BJ (cell line): ENCODE measurements at regions of chr4 and their contacts with region 1.

Region 1: DNA sequence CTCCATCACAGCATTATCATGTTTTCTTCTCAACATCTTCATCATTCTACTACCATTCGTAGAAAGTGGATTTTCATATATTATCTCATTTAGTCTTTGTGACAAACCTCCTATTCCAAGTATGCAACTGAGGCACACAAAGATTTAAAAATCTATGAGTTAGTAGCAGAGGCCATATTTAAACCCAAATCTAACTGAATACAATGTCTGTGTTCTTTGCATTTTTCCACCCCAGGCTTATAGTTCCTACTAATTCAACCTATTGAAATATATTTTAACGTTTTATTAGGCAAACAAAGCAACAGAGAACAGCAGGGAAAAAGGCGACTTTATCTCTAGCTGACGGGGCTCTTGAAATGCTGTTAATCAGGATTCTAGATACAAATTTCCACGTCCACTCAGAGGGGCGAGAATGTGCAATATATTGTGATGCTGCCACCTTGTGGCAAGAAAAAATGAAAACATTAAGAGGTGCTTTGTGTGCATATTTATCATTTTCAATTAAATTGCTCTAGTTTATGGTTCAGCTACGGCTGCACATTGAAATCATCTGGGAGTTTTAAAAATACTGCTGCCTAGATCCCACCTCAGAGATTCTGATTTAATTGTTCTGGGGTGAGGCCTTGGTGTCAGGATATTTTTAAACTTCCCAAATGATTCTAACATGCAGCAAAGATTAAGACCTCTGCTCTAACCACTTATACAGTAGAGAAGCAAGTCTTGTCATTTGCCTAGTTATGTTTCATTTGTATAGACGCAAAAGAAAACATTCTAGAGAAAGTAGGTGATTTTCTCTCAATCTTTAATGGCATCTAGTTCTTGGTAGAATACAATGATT is 315.9 kb downstream of the MAPK10 start:
- DNase-seq: no peak
- H3K4me3 ChIP-seq: no peak overlapping the region
- H3K27me3 ChIP-seq: no peaks in the 10 kb centered on the region
- CTCF ChIP-seq: peak; percentile 57

Region 2: DNA sequence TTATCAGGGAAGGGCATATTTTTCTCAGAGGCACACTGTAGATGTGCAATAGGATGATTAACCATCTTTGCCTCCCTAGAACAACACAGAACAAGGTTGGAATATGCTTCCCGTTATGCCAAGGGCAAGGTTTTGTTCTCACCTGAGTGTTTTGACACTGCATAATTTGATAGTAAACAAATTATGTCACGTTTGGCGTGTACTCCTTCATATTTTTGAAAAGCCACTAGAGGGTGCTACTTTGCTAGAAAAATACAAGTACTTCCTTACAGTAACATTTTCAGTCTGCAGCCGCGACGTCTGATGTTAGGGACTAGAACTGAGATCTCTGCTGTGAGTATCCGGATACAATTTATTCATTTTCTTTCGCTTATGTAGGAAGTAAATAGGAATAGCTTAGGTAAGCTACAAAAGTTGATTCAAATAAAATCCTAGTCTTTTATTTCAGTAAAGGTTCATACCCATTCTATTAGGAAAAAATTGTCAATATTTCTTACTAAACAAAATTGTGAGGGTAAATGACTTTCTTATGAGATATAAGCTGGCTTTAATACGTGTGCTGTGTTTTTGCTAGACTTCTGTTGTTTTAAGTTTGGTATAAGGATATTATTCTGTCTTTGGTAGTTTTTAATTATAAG is 896.4 kb before region 1 on chr4:
- CTCF ChIA-PET with region 1: interaction called, 14 read pairs
- POLR2A ChIA-PET with region 1: no interaction called
- DNase-seq: no peak
- H3K4me3 ChIP-seq: no peak overlapping the region
- H3K27me3 ChIP-seq: no peaks in the 10 kb centered on the region
- CTCF ChIP-seq: peak; percentile 63

Region 3: DNA sequence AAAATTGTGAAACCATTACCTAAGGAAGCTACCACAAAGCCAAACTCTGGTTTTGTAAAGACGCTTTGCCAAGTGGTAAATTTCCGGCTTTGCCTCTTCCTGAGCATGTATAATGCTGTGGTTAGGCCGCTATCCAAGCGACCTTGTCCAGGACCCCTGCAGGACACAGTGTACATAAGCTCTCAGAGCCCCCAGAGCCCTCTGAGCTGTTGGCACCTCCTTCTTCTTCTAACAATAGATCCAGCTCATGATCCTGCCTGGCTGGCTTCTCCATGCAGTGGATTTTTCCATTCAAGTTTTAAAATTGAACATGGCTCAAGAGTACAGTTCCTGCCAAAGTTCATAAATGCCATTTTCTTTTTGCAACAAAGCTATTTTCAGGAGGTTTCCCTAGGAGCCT is 10.8 kb before region 1 on chr4:
- CTCF ChIA-PET with region 1: interaction called, 19 read pairs
- POLR2A ChIA-PET with region 1: no interaction called
- DNase-seq: no peak
- H3K4me3 ChIP-seq: no peak overlapping the region
- H3K27me3 ChIP-seq: no peaks in the 10 kb centered on the region; the same call in 1 of the 2 replicates
- CTCF ChIP-seq: no peak

Region 4: GRCh38 chr4:86055898-86056297 is 11.9 kb after region 1 on chr4:
- CTCF ChIA-PET with region 1: interaction called, 14 read pairs
- POLR2A ChIA-PET with region 1: no interaction called
- DNase-seq: no peak
- H3K4me3 ChIP-seq: no peak overlapping the region
- H3K27me3 ChIP-seq: no peaks in the 10 kb centered on the region
- CTCF ChIP-seq: no peak